Mammary epithelial cell (primary cell): ENCODE measurements at regions of chr22 and their contacts with region 1.

Region 1: GRCh38 chr22:39236321-39237317 is 8.2 kb downstream of the PDGFB start:
- DNase-seq: no peak
- H3K4me3 ChIP-seq: no peak overlapping the region
- H3K27ac ChIP-seq: no peak overlapping the region
- H3K4me1 ChIP-seq: peaks cover 39% of the 10 kb centered on the region
- H3K27me3 ChIP-seq: no peaks in the 10 kb centered on the region
- CTCF ChIP-seq: no peak

Region 2: DNA sequence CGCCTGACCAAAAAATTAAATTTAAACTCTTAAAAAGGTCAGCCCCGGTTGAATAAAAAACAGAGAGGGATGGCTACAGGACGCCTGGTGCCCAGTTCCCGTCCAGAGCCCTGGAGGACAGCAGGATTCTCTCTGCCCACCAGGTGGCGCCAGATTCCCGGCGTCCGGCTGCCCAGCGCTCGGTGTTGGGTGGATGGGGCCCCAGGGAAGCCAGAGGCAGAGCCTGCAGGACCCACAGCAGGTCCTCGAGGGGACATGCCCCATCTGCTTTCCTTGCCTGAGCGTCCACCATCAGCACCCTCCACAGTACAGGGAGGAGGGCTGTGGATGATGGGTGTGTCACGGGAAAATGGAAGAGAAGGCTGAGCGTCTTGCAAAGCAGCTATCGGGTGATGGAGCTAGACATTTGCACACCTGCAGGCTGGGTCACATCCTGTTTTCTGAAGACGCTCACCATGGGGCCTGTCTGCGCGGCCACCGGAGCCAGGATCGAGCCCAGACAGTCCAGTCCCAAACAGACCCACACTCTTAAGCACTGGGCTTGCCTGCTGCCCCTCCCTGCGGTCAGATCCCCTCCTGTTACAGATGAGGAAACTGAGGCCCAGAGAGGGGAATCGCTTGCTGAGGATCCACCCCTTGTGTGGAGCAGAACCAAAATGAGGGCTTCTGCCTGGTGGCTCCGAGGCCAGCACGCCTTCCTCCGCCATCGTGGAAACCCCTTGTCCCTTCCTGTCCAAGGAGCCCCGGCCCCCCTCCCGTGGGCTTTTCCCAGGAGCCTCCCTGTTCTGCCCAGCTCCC is 65.6 kb before region 1 on chr22:
- CTCF ChIA-PET with region 1: no interaction called
- dilution Hi-C with region 1: no loop called
- in situ Hi-C with region 1: no loop called
- intact Hi-C with region 1: loop called (anchors 1 kb)
- DNase-seq: peak; percentile 69
- H3K4me3 ChIP-seq: no peak overlapping the region
- H3K27ac ChIP-seq: no peak overlapping the region
- H3K4me1 ChIP-seq: peaks cover 31% of the 10 kb centered on the region
- H3K27me3 ChIP-seq: no peaks in the 10 kb centered on the region
- CTCF ChIP-seq: peak; percentile 70 to 94

Region 3: GRCh38 chr22:39205338-39206021 is 31.1 kb before region 1 on chr22:
- CTCF ChIA-PET with region 1: no interaction called
- dilution Hi-C with region 1: no loop called
- in situ Hi-C with region 1: no loop called
- intact Hi-C with region 1: no loop called
- DNase-seq: peak; percentile 78
- H3K4me3 ChIP-seq: no peak overlapping the region
- H3K27ac ChIP-seq: peak overlapping the region; percentile 51
- H3K4me1 ChIP-seq: peaks cover 35% of the 10 kb centered on the region
- H3K27me3 ChIP-seq: no peaks in the 10 kb centered on the region
- CTCF ChIP-seq: no peak

Region 4: DNA sequence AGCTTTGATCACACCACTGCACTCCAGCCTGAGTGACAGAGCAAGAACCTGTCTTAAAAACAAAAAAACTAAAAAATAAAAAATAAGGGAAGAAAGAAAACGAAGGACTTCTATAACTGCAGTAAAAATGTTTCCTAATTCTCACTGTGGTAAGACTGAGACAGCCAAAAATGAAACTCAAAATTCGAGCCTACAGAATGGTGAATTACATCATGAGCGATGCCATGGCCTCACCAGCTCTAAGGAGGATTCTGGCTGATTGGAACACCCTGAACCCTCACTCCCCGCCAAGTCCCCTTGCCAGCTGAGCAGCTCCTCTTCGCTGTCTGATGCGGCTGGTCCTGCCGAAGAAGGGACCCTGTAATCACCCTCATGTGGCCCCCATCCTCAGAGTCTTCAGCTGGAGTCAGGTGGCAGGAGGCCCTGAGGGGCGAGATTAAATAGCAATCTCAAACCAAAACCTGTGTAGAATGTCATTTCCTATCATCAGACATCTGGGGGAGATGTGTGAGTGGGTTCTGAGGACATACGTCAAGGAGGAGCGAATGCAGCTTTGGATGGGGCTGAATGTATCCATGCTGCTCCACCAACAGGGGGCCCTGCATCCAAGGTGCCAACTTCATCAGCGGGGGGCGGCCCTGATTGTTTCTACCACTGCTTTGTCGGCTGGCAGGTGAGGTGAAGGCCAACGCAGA is 21.0 kb before region 1 on chr22:
- CTCF ChIA-PET with region 1: no interaction called
- dilution Hi-C with region 1: no loop called
- in situ Hi-C with region 1: no loop called
- intact Hi-C with region 1: loop called (anchors 2 kb)
- DNase-seq: no peak
- H3K4me3 ChIP-seq: no peak overlapping the region
- H3K27ac ChIP-seq: peak overlapping the region; percentile 46
- H3K4me1 ChIP-seq: peaks cover 37% of the 10 kb centered on the region
- H3K27me3 ChIP-seq: no peaks in the 10 kb centered on the region
- CTCF ChIP-seq: no peak

Region 5: DNA sequence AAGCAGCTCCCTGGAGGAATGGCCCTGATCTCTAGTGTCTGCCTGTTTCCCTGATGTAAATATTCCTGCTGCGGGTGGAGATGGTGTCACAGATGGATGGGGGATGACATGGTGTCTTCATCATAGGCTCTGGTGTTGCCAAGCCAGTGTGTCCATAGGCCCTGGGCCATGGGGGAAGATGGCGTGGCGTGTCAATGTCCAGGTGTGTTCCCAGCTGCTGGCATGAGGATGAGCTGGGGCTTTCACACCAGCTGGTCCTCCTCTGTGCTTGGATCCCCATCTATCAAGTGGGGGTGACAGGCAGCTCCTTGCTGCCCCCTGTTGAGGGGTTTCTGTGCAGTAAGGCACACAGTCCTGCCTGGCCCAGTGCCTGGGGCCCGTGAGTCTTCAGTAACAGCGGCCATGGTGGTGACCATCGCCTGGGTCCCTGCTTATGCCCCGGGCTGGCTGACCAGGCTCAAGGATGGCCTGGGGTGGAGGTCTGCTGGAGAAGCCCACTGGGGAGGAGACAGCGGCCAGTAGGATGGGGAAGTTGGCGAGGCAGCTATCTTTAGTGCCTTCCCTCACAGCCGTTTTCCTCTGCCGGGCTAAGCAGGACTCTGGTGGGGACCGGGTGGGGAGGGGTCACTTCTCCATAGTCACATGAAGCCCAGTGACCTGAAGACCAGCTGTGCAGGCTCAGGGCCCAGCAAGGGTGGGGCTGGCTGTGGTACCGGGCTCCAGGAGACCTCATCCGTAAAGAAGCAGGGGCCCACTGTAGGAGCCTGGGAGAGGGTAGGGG is 70.2 kb after region 1 on chr22:
- CTCF ChIA-PET with region 1: no interaction called
- dilution Hi-C with region 1: no loop called
- in situ Hi-C with region 1: loop called in 1 of 2 experiments (anchors 5 kb)
- intact Hi-C with region 1: no loop called
- DNase-seq: no peak
- H3K4me3 ChIP-seq: no peak overlapping the region
- H3K27ac ChIP-seq: no peak overlapping the region
- H3K4me1 ChIP-seq: peaks cover 36% of the 10 kb centered on the region
- H3K27me3 ChIP-seq: no peaks in the 10 kb centered on the region
- CTCF ChIP-seq: peak; percentile 39 to 54

Region 6: DNA sequence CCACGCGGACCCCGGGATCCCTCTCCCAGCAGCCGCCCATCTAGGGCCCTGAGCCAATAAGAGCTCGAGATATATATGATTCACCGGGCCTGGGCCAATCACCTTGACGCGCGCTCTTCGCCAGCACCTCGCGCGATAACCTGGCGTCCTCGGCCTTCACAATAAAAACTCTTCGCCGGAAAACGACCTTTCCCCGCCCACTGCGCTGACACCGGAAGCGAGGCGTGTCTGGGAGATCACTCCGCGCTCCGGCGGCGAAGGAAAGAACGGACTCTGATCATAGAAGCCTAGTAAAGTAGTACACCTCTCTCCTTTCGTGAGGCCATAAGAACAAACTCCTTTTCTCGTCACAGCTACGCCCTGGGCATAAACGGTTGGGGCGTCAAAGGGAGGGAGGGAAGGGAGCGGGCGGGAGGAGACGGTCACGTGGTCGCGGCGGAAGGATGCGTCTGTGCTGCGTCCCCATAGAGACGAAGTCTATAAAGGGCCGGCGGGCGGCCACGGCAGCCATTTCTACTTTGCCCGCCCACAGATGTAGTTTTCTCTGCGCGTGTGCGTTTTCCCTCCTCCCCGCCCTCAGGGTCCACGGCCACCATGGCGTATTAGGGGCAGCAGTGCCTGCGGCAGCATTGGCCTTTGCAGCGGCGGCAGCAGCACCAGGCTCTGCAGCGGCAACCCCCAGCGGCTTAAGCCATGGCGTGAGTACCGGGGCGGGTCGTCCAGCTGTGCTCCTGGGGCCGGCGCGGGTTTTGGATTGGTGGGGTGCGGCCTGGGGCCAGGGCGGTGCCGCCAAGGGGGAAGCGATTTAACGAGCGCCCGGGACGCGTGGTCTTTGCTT is 283.7 kb after region 1 on chr22 and contains the start of gene ATF4:
- CTCF ChIA-PET with region 1: no interaction called
- dilution Hi-C with region 1: loop called (anchors 25 kb)
- in situ Hi-C with region 1: no loop called
- intact Hi-C with region 1: no loop called
- DNase-seq: peak; percentile 99
- H3K4me3 ChIP-seq: peak within 1 kb of the TSS; percentile 77 to 96 (median 93)
- H3K27ac ChIP-seq: peak within 1 kb of the TSS; percentile 82
- H3K4me1 ChIP-seq: peaks cover 16% of the 10 kb centered on the region
- H3K27me3 ChIP-seq: no peaks in the 10 kb centered on the region
- CTCF ChIP-seq: no peak
- total RNA-seq, gene ATF4: 598 to 653 TPM